Endothelial cell of umbilical vein (primary cell): ENCODE measurements at regions of chr16 and their contacts with region 1.

Region 1: GRCh38 chr16:67561824-67562525 is 351 bp upstream of the CTCF start:
- DNase-seq: peak; percentile 96
- H3K4me3 ChIP-seq: peak overlapping the region; percentile 17 to 70 (median 64)
- H3K27ac ChIP-seq: peak overlapping the region; percentile 84
- H3K4me1 ChIP-seq: peaks cover 18% of the 10 kb centered on the region
- H3K27me3 ChIP-seq: no peaks in the 10 kb centered on the region
- CTCF ChIP-seq: no peak
- POLR2A ChIP-seq: peak; percentile 81

Region 2: DNA sequence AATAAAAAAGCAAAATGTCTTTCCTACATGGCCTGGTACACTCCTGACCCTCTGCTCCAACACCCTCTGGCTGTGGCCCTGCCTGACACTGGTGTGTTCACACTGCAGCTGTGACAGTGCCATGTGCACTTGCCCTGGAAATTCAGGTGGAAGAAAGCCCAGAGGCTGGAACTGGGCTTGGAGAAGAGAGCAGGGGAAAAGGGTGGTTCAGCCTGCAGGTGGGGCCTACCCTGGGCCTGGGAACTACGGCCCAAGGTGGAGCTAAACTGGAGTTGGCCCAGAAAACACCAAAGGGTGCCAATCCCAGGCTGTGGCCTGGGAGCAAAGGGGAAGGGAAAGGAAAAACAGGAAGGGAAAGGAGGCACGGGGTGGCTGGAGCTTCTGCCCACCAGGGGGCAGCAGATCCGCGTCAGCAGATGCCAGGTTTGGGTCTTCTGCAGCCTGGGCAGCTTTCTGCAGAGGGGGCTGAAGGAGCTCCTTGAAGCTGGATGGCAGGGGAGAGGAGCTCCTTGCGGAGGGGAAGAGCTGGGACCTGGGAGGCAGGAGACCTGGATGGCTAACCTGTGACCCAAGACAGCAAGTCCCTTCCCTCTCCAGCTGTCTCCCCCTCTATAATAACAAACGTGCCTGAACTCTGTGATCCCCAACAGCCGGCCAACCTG is 15.1 kb before region 1 on chr16:
- CTCF ChIA-PET with region 1: interaction called, 177 read pairs
- POLR2A ChIA-PET with region 1: interaction called, 24 read pairs
- dilution Hi-C with region 1: no loop called
- intact Hi-C with region 1: loop called (anchors 1 kb)
- DNase-seq: peak; percentile 89
- H3K4me3 ChIP-seq: no peak overlapping the region
- H3K27ac ChIP-seq: peak overlapping the region; percentile 83
- H3K4me1 ChIP-seq: peaks cover 23% of the 10 kb centered on the region
- H3K27me3 ChIP-seq: no peaks in the 10 kb centered on the region
- CTCF ChIP-seq: peak; percentile 93 to 97
- POLR2A ChIP-seq: peak; percentile 50

Region 3: GRCh38 chr16:67613808-67614207 is 51.8 kb after region 1 on chr16:
- CTCF ChIA-PET with region 1: no interaction called
- POLR2A ChIA-PET with region 1: no interaction called
- dilution Hi-C with region 1: no loop called
- intact Hi-C with region 1: loop called (anchors 5 kb)
- DNase-seq: no peak
- H3K4me3 ChIP-seq: no peak overlapping the region
- H3K27ac ChIP-seq: no peak overlapping the region
- H3K4me1 ChIP-seq: no peaks in the 10 kb centered on the region
- H3K27me3 ChIP-seq: no peaks in the 10 kb centered on the region
- CTCF ChIP-seq: peak in 1 of 2 donors; percentile 4
- POLR2A ChIP-seq: no peak

Region 4: GRCh38 chr16:67660564-67661028 is 98.6 kb after region 1 on chr16 and contains the start of gene PARD6A:
- CTCF ChIA-PET with region 1: interaction called, 13 read pairs
- POLR2A ChIA-PET with region 1: no interaction called
- dilution Hi-C with region 1: no loop called
- intact Hi-C with region 1: loop called (anchors 1 kb)
- DNase-seq: peak; percentile 94
- H3K4me3 ChIP-seq: peak within 1 kb of the TSS; percentile 32 to 70 (median 64)
- H3K27ac ChIP-seq: peak within 1 kb of the TSS; percentile 44
- H3K4me1 ChIP-seq: peaks cover 9% of the 10 kb centered on the region
- H3K27me3 ChIP-seq: no peaks in the 10 kb centered on the region
- CTCF ChIP-seq: no peak
- POLR2A ChIP-seq: no peak
- total RNA-seq, gene PARD6A: 1.3 and 1.7 TPM in 2 replicates

Region 5: DNA sequence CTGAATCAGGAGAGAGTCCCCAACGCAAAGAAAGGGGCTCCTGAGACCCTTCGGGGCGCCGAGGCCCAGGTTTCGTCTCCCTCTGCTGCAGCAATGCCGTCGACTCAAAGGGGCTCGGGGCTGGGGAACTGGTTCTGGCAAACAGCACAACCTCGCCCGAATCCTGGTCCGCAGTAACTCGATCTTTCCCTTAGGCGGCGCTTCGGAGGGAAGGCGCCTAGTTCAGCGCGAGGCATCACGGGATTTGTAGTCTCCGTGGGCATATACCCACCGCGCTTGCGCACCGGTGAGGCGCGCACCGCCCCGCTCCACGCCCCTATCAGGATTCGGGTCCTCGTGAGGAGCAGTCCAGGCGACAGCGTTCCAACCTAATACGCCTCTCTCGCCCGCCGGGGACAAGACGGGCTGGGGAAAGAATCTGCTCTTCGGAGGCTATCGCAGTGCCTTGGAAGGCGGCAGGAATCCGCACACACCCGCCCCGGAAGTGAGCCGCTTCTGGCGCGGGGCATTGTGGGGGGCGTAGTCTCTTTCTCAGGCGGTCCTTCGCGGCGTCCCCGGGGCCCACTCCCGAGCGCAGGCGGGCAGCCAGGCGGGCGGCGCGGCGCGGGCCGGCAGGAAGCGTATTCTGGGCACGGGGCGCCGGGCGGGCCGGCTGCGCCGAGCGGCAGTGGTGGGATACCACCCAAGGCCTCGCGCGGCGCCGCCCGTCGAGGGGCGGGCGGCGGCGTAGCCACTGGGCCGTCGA is 280.0 kb after region 1 on chr16 and contains the start of gene THAP11:
- CTCF ChIA-PET with region 1: no interaction called
- POLR2A ChIA-PET with region 1: no interaction called
- dilution Hi-C with region 1: no loop called
- intact Hi-C with region 1: loop called (anchors 1 kb)
- DNase-seq: peak; percentile 95
- H3K4me3 ChIP-seq: peak within 1 kb of the TSS; percentile 32 to 58 (median 57)
- H3K27ac ChIP-seq: peak within 1 kb of the TSS; percentile 77
- H3K4me1 ChIP-seq: peaks cover 26% of the 10 kb centered on the region
- H3K27me3 ChIP-seq: no peaks in the 10 kb centered on the region
- CTCF ChIP-seq: peak; percentile 82 to 93
- POLR2A ChIP-seq: peak; percentile 44
- total RNA-seq, gene THAP11: 22.6 and 24.0 TPM in 2 replicates

Region 6: DNA sequence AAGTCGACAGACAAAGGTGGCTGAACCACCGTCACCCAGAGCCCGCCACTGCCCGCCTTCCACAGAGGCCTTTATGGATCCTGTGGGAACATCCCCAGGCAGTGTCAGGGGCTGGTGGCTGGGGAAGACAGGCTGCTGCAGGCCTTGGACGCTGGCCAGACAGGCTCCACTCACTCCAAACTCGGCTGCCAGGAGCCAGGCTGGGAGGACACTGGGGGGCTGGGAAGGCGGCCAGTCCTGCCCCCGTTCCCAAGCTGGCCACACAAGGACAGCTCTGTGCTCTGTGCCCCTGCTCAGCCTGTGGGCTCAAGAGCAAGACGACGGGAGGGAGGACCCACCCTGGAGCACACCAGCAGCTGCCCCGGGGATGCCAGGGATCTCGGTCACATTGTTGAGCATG is 389.5 kb after region 1 on chr16:
- CTCF ChIA-PET with region 1: no interaction called
- POLR2A ChIA-PET with region 1: no interaction called
- dilution Hi-C with region 1: no loop called
- intact Hi-C with region 1: no loop called
- DNase-seq: no peak
- H3K4me3 ChIP-seq: no peak overlapping the region
- H3K27ac ChIP-seq: no peak overlapping the region
- H3K4me1 ChIP-seq: no peaks in the 10 kb centered on the region
- H3K27me3 ChIP-seq: no peaks in the 10 kb centered on the region
- CTCF ChIP-seq: no peak
- POLR2A ChIP-seq: no peak